HEK293 (cell line): ENCODE measurements at regions of chr16 and their contacts with region 1.

Region 1: GRCh38 chr16:52068447-52069074 is 478.4 kb downstream of the TOX3 start:
- H3K4me3 ChIP-seq: no peak overlapping the region
- H3K27ac ChIP-seq: no peak overlapping the region
- H3K4me1 ChIP-seq: 0 out of 2 replicates have a peak, but pooled peaks cover 3% of the 10 kb centered on the region
- CTCF ChIP-seq: peak; percentile 56; the same call in 1 of the 2 replicates

Region 2: GRCh38 chr16:52054326-52054725 is 14.2 kb before region 1 on chr16:
- CTCF ChIA-PET with region 1: interaction called, 11 read pairs
- POLR2A ChIA-PET with region 1: no interaction called
- H3K4me3 ChIP-seq: no peak overlapping the region
- H3K27ac ChIP-seq: no peak overlapping the region
- H3K4me1 ChIP-seq: no peaks in the 10 kb centered on the region
- CTCF ChIP-seq: no peak

Region 3: GRCh38 chr16:52191531-52192134 is 123.1 kb after region 1 on chr16:
- CTCF ChIA-PET with region 1: interaction called, 16 read pairs
- POLR2A ChIA-PET with region 1: no interaction called
- H3K4me3 ChIP-seq: no peak overlapping the region
- H3K27ac ChIP-seq: no peak overlapping the region
- H3K4me1 ChIP-seq: no peaks in the 10 kb centered on the region
- CTCF ChIP-seq: peak; percentile 64

Region 4: DNA sequence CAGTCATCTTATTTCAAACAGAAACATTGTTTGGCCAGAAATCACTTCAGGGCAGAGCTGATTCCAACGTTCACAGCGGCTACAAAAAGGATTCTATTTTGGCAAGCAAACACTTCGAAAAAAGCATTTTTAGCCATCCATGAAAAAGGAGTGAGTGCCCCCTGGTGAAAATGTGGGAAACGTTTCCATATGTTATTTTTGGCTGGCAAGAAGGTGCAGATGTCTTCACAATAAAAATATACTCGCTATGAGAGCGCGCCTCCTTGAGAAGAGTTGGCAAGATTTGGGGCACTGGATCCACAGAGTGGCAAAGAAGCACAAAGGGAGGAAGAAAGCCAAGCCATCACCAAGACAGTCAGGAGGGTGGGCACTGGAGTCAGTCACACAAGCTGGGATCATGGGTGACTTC is 793.1 kb after region 1 on chr16:
- CTCF ChIA-PET with region 1: interaction called, 33 read pairs
- POLR2A ChIA-PET with region 1: no interaction called
- H3K4me3 ChIP-seq: no peak overlapping the region
- H3K27ac ChIP-seq: no peak overlapping the region
- H3K4me1 ChIP-seq: no peaks in the 10 kb centered on the region
- CTCF ChIP-seq: 0 out of 2 replicates have a peak, but pooled peaks have one; percentile 38

Region 5: DNA sequence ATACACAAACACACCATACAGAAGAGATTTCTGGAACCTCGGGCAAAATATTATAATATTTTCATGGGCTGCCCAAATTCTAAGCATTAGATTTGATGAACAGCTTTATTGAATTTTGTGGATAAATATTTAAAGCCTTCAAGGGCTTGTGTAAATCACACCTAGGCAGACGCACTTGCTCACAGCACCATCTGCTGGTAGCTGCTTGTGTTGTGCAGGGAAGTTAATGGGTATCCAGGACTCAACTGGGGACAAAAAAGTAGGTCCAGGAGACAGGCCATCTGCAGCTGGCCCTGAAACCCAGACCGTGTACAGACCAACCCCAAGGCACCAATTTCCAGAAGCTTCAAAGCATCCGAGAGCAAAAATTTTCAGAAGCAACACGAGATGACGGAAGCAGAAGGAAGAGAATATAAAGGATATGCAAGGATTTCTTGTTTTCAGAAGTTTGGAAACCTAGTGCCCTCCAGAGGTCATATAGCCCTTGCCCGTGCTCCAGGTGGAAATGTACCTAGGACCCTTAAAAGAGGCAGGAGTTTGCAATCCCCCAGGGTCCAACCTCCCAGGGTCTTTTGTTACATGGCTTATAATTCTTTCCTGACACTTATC is 844.1 kb after region 1 on chr16:
- CTCF ChIA-PET with region 1: interaction called, 61 read pairs
- POLR2A ChIA-PET with region 1: no interaction called
- H3K4me3 ChIP-seq: no peak overlapping the region
- H3K27ac ChIP-seq: no peak overlapping the region
- H3K4me1 ChIP-seq: no peaks in the 10 kb centered on the region
- CTCF ChIP-seq: peak; percentile 50; the same call in 1 of the 2 replicates

Region 6: DNA sequence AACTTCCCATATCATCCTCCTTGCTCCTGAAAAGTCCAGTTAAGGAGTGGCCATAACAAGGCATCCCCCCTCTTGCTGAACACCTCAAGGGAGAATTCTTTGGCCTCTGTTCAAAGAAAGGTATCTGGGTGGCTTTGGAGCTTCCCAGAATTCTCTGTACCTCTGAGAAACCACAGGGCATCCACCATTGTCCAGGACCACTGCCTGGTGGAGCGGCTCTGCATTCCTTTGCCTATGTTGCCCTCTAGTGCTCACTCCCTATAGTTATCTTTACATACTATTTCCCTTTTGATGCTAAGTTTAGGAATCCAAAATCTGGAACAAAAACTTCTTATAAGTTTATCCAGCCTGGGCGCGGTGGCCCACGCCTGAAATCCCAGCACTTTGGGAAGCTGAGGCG is 953.8 kb after region 1 on chr16:
- CTCF ChIA-PET with region 1: interaction called, 47 read pairs
- POLR2A ChIA-PET with region 1: no interaction called
- H3K4me3 ChIP-seq: no peak overlapping the region
- H3K27ac ChIP-seq: no peak overlapping the region
- H3K4me1 ChIP-seq: no peaks in the 10 kb centered on the region
- CTCF ChIP-seq: peak; percentile 59